ENCODE measurements at regions of chr11 and their contacts with region 1.

Region 1: DNA sequence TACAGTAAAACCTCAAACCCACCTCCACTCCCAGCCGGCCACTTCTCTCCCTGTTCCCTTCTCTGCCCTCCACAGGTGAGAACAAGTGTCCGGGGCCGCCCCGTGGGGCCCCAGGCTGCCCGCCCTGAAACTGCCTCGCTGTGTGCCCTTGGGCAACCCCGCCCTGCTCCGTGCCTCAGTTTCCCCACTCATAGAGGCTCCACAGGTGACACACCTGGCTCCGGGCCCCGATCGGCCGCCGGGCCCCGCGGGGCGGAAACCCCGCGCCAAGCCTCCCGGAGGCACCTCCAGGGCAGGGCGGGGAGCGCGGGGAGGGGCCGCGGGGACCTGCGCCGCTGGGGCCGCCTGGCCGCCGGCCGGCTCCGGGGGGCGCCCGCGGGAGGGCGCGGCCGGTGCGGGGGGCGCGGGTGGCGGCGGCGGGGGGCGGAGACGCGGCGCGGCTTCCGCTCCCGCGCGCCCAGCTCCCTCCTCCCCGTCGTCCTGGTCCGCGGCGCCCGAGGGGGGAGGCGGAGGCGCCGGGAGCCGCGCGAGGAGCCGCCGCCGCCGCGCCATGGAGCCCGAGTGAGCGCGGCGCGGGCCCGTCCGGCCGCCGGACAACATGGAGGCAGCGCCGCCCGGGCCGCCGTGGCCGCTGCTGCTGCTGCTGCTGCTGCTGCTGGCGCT is at the start of gene LRP5:
- DNase-seq: no peak
- H3K4me3 ChIP-seq: peak within 1 kb of the TSS; percentile 33 to 88 (median 78)
- H3K27ac ChIP-seq: peak within 1 kb of the TSS; percentile 69
- H3K4me1 ChIP-seq: peaks cover 25% of the 10 kb centered on the region
- H3K27me3 ChIP-seq: no peaks in the 10 kb centered on the region
- CTCF ChIP-seq: no peak
- POLR2A ChIP-seq: no peak
- total RNA-seq, gene LRP5: 44.3 and 51.8 TPM in 2 replicates

Region 2: DNA sequence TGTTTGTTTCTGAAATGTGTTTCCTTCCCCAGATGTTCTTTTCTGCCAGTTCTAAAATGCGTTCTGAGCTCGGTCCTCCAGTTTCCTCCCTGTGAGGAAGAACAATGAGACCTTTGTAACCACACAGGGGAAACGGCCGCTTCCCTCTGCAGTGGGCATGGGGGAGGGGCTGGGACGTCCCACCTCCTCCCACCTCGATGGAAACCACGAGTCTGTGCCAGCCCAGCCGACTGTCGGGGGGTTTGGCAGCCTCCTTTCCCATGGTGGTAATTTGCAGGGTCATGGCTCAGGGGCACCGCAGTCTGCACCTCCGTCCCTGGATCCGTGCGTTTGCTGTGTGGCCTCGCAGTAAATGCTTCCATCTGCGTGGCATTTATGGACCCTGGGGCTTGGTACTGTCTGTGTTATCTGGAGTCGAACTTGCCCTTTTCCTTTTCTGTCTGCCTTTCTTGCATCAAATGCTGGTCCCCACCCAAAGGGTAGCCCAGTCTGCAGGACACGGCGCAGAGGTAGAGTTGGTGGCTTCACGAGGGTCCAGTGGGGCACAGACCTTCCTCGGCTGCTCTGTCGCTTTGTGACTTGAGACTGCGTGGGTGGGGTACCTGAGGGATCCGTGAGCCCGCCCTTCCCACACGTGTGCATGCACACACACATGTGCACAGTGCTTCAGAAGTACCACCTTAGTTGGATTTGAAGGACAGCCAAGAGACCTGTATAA is 16.3 kb after region 1 on chr11:
- CTCF ChIA-PET with region 1: interaction called, 11 read pairs
- POLR2A ChIA-PET with region 1: no interaction called
- dilution Hi-C with region 1: no loop called
- intact Hi-C with region 1: loop called (anchors 1 kb)
- DNase-seq: peak; percentile 84
- H3K4me3 ChIP-seq: no peak overlapping the region
- H3K27ac ChIP-seq: peak overlapping the region; percentile 35
- H3K4me1 ChIP-seq: peaks cover 53% of the 10 kb centered on the region
- H3K27me3 ChIP-seq: no peaks in the 10 kb centered on the region
- CTCF ChIP-seq: no peak
- POLR2A ChIP-seq: peak; percentile 57

Measured in endothelial cell of umbilical vein (primary cell).